ENCODE measurements at regions of chr7 and their contacts with region 1.

Region 1: GRCh38 chr7:139620676-139621344 is 97.3 kb downstream of the CLEC2L start:
- DNase-seq: peak; percentile 60
- CTCF ChIP-seq: peak; percentile 52

Region 2: DNA sequence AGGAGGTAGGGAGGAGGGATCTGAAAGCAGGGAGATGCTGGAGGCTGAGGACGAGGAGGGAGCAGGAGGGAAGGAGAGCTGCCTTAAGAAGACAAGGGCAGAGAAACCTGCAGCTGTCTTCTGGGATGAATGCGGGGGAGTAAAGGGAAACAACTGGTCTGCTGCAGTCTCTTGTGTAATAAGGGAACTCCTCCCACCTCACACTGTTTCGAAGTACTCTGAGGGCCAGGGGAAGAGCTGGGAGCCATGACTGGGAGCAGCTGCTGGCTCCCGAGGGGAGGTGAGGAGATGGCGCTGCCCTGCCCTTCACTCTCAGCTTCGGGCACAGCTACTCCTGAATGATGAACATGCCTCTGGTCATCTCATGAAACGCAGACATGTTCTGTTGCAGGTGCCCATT is 32.2 kb before region 1 on chr7:
- CTCF ChIA-PET with region 1: interaction called, 12 read pairs
- POLR2A ChIA-PET with region 1: no interaction called
- DNase-seq: no peak
- CTCF ChIP-seq: no peak

Region 3: DNA sequence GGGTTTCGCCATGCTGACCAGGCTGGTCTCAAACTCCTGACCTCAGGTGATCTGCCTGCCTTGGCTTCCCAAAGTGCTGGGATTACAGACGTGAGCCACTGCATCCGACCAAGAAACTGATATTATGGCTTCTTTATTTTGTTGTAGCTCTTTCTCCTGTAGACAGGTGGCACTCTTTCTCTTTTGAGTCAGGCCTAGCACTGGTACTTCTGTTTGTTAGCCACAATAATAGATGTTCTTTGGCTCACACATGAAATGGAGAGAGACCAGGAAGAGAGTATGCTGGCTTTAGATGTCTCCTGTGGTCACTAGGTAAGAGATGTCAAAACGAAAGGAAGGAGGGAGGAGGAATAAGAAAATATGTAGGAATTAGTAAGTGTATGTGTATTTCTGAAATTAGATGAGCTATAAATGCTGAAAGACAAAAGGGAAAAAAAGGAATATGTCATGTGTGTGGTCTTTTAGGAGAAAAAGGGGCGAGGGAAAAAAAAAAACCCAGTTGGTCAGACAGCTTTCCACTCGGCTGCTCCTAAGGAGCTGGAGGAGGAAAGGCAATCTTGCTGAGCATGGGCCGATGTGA is 18.6 kb before region 1 on chr7:
- CTCF ChIA-PET with region 1: interaction called, 65 read pairs
- POLR2A ChIA-PET with region 1: no interaction called
- DNase-seq: peak; percentile 41
- CTCF ChIP-seq: peak; percentile 47

Region 4: DNA sequence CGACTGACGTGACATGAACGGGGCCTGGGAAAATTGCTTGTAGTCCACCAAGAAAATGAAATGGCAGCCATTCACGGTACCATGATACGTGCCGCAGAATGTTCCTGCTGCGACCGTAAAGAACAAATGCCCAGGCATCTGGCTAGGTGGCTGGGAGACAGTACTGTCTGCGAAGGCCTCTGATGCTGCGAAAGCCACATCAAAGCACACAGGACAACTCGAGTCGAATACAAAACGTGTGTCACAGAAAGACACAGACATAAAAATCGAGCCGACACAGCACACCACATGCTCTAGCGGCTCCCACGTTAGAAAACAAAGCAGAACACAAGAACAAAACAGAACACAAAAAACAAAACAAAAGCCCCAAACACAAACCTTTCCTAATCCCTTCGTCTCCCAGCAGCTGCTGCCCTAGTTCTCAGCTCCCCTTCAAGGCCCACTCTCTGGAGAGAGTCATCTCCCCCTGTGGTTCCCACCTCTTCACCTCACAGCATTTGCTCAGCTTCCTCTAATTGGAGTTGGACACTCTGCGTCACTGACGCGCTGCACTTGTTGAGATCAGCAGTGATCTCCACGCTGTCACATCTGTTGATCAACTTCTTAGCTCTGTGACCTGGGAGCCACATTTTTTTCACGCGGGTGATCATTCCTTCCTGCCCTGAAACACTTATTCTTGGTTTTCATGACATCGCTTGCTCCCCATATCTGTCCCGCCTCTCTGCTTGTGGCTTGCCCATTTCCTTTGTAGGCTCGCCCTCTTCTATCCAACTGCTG is 14.9 kb after region 1 on chr7:
- CTCF ChIA-PET with region 1: interaction called, 12 read pairs
- POLR2A ChIA-PET with region 1: no interaction called
- DNase-seq: no peak
- CTCF ChIP-seq: no peak

Region 5: DNA sequence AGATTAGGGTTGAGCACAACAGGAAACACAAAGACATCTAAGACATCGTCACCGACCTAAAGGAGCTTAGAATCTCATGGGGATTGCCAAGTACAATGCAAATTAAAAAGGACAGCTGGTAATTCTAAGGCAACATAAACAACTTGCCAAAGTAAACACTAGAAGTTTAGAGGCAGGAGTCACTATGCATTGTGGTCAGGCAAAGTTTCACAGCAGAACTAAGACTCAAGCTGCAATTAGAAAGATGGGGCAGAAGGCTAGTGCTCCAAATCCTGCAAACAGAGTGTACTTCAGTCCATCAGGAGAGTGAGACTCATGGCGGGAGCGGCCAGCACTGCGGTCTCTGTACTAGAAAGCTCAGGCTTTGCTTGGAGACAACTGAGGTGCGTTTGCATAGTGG is 104.3 kb after region 1 on chr7:
- CTCF ChIA-PET with region 1: no interaction called
- POLR2A ChIA-PET with region 1: no interaction called
- DNase-seq: peak; percentile 46
- CTCF ChIP-seq: no peak

Measured in GM10248 (cell line).